Heart right ventricle (tissue), 16 donors: ENCODE measurements at regions of chr10 and their contacts with region 1.

Region 1: DNA sequence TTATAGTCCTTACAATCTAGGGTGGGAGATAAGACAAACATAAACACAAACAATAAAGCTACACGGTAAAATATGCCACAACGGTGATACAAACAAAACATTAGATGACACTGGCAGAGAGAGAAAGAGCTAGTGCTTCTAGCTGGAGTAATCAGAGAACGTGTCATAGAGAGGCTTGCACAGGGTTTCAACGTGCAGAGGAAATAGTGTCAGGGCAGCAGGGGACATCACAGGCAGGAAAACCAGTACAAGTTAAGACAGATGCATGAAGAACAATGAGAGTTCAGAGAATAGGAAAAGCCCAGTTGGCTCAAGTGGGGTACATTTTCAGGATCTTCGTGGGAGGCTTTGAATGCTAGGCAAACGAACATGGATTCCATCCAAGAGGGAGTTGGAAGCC is 91.4 kb downstream of the ZNF438 start:
- DNase-seq: no peak
- ATAC-seq: peak in 3 of 8 donors; percentile 38 to 65 (median 56)
- H3K4me3 ChIP-seq: no peak overlapping the region
- H3K27ac ChIP-seq: peak overlapping the region in 3 of 10 donors; percentile 4 to 60 (median 23)
- H3K4me1 ChIP-seq: peaks cover 4 to 32% (median 18%) of the 10 kb centered on the region in 9 donors
- H3K27me3 ChIP-seq: no peaks in the 10 kb centered on the region
- CTCF ChIP-seq: peak in 1 of 9 donors; percentile 16

Region 2: DNA sequence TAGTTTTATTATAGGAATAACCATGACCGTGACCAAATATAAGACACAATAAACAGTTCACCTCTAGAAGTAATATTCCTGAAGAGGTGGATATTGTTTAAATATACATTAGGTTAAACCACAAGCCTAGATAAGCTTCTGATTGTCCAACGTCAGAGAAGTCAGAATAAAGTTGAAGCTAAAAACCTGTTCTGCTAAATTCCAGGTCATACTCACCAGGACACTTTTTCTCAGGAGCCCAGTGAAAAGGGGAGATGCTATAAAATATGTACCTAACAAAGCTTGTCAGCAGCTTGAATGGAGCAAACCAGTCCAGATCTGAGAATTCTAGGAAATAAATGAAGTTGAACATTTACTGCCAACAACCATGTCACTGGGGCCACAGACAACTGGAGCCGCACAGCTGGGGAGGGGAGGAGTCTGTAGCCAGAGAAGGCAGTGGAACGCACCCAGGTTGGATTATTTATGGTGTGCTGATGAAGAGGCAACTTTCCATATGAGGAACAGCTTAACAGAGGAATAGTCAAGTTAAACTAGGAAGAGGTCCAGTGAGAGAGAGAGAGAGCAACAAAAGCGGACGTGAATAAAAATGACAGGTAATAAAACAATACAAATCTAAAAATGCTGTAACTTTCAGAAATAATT is 99.7 kb before region 1 on chr10:
- intact Hi-C with region 1: loop called in 1 of 10 experiments (anchors 10 kb)
- DNase-seq: no peak
- ATAC-seq: peak in 5 of 8 donors; percentile 43 to 68 (median 62)
- H3K4me3 ChIP-seq: no peak overlapping the region
- H3K27ac ChIP-seq: peak overlapping the region in 1 of 10 donors; percentile 26
- H3K4me1 ChIP-seq: peaks cover 0 to 32% (median 0%) of the 10 kb centered on the region in 9 donors
- H3K27me3 ChIP-seq: no peaks in the 10 kb centered on the region
- CTCF ChIP-seq: no peak

Region 3: DNA sequence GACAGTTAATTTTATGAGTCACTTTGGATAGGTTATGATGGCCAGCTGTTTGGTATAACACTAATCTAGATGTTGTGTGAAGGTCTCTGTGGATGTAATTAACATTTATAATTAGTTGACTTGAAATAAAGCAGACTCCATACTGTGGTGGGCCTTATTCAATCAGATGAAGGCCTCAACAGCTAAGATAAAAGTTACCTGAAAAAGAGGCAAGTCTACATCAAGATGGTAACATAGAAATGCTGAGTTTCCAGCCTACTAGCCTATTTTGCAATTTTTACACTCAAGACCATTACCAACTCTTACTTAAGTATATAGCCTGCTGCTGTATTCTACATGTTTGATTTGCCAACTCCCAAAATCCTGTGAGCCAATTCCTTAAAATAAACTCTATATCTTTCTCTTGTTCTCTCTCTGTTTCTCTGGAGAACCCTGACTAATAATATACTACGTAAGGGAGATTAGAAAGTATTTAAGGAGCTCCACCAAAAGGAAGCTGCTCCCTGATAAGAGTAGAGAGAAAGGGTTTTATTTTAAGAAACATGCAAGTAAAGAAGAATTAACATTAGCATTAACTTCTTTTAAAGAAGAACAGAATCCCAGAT is 48.7 kb after region 1 on chr10:
- intact Hi-C with region 1: no loop called
- DNase-seq: no peak
- ATAC-seq: peak; percentile 22 to 84 (median 75)
- H3K4me3 ChIP-seq: peak overlapping the region in 1 of 10 donors; percentile 1
- H3K27ac ChIP-seq: peak overlapping the region in 9 of 10 donors; percentile 33 to 84 (median 67)
- H3K4me1 ChIP-seq: peaks cover 0 to 83% (median 60%) of the 10 kb centered on the region in 9 donors
- H3K27me3 ChIP-seq: no peaks in the 10 kb centered on the region
- CTCF ChIP-seq: no peak

Region 4: DNA sequence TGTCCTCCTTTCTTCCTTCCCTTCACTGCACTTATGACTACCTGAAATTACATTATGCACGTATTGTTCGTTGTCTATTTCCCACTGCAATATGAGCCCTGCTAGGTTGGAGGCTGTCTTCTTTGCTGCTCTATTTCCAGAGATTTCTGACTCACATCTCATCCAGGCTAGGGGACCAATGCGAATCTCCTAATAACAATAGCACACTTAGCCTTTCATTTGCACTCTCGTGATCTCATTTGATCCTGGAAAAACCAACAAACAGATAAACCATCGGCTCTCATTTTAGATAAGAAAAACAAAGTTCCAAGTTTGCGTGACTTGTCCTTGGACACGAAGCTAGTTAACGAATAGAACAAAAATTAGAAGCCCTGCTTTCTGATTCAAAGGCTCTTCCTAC is 90.0 kb after region 1 on chr10:
- intact Hi-C with region 1: no loop called
- DNase-seq: no peak
- ATAC-seq: no peak
- H3K4me3 ChIP-seq: peak overlapping the region in 4 of 10 donors; percentile 63 to 75 (median 71)
- H3K27ac ChIP-seq: peak overlapping the region in 8 of 10 donors; percentile 97 to 100 (median 99)
- H3K4me1 ChIP-seq: peaks cover 0 to 62% (median 50%) of the 10 kb centered on the region in 9 donors
- H3K27me3 ChIP-seq: no peaks in the 10 kb centered on the region
- CTCF ChIP-seq: no peak